ENCODE measurements at regions of chr1 and their contacts with region 1.

Region 1: GRCh38 chr1:233406994-233407631 is 79.6 kb downstream of the MAP3K21 start:
- DNase-seq: no peak
- H3K4me3 ChIP-seq: no peak overlapping the region
- H3K27ac ChIP-seq: no peak overlapping the region
- H3K4me1 ChIP-seq: no peaks in the 10 kb centered on the region
- H3K27me3 ChIP-seq: no peaks in the 10 kb centered on the region
- CTCF ChIP-seq: no peak

Region 2: GRCh38 chr1:232344791-232345399 is 1062.2 kb before region 1 on chr1:
- CTCF ChIA-PET with region 1: interaction called, 10 read pairs
- dilution Hi-C with region 1: no loop called
- in situ Hi-C with region 1: no loop called
- intact Hi-C with region 1: no loop called
- DNase-seq: peak; percentile 67
- H3K4me3 ChIP-seq: no peak overlapping the region
- H3K27ac ChIP-seq: no peak overlapping the region
- H3K4me1 ChIP-seq: no peaks in the 10 kb centered on the region
- H3K27me3 ChIP-seq: no peaks in the 10 kb centered on the region
- CTCF ChIP-seq: no peak

Region 3: GRCh38 chr1:233909195-233909594 is 502.1 kb after region 1 on chr1:
- CTCF ChIA-PET with region 1: no interaction called
- dilution Hi-C with region 1: no loop called
- in situ Hi-C with region 1: no loop called
- intact Hi-C with region 1: no loop called
- DNase-seq: peak; percentile 92
- H3K4me3 ChIP-seq: no peak overlapping the region
- H3K27ac ChIP-seq: peak overlapping the region; percentile 72
- H3K4me1 ChIP-seq: peaks cover 42% of the 10 kb centered on the region
- H3K27me3 ChIP-seq: no peaks in the 10 kb centered on the region
- CTCF ChIP-seq: no peak

Measured in mammary epithelial cell (primary cell).